Ascending aorta (tissue), 2 donors: ENCODE measurements at regions of chr14 and their contacts with region 1.

Region 1: DNA sequence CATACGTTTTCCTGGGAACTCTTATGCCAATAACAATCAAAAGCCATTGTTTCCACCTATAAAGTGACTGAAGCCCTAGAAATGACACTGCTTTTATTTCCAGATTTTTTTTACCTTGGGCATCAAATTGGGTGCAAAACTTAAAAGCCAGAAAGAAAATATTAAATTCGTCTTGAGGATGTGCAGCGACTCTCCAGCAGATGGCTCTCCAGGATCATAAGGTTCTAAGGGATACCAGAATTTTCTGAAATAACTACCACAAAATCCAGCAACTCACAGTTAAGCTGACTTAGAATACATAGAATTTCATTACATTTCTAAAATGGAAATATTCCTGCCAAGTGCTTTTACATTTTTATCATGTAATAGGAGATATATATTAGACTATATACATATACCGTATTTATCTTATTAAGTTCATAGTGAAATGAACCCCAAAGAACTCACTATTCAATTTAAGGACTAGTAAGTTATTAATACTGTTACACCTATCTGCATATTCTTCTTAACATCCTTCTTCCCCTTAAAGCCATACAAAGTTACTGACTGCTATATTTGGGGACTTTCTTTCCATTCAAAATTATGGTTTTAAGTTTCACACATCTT is 44.0 kb downstream of the ARMH4 start:
- DNase-seq: peak in 1 of 2 donors; percentile 66
- H3K4me3 ChIP-seq: no peak overlapping the region
- H3K27ac ChIP-seq: no peak overlapping the region
- H3K4me1 ChIP-seq: no peaks in the 10 kb centered on the region
- H3K27me3 ChIP-seq: no peaks in the 10 kb centered on the region
- CTCF ChIP-seq: peak; percentile 65 to 84 (median 68)

Region 2: GRCh38 chr14:58166005-58166983 is 58.2 kb after region 1 on chr14:
- intact Hi-C with region 1: loop called (anchors 1 kb)
- DNase-seq: peak; percentile 15 to 90
- H3K4me3 ChIP-seq: no peak overlapping the region
- H3K27ac ChIP-seq: no peak overlapping the region
- H3K4me1 ChIP-seq: no peaks in the 10 kb centered on the region
- H3K27me3 ChIP-seq: no peaks in the 10 kb centered on the region
- CTCF ChIP-seq: peak; percentile 49 to 93 (median 87)

Region 3: GRCh38 chr14:58227096-58227819 is 119.2 kb after region 1 on chr14:
- intact Hi-C with region 1: no loop called
- DNase-seq: no peak
- H3K4me3 ChIP-seq: no peak overlapping the region
- H3K27ac ChIP-seq: no peak overlapping the region
- H3K4me1 ChIP-seq: no peaks in the 10 kb centered on the region
- H3K27me3 ChIP-seq: no peaks in the 10 kb centered on the region
- CTCF ChIP-seq: no peak